ENCODE measurements at regions of chr18 and their contacts with region 1.

Region 1: GRCh38 chr18:46173393-46174341 is 69.5 kb downstream of the HAUS1 start:
- DNase-seq: peak; percentile 75
- H3K27ac ChIP-seq: peak overlapping the region; percentile 96
- CTCF ChIP-seq: peak; percentile 94

Region 2: DNA sequence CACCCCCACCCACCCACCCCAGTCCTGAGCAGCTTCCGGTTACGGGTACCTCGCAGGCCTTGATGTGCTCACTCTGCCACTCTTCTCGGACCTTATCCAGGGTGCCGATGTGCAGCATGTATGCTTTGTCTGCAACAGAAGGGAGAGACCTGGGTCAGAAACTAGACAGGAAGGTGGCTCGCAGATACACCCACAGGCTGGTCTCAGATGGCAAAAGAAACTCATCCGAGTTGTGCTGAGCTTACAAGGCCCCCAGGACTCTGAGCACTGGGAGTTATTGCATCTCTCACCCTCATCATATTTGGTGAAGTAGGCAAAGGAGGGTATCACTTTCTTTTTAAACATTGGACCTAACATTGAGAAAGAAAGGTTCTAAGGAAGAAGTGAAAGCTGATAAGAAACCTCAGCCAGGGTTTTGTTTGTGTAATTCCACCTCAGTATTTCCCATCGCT is 175.9 kb before region 1 on chr18:
- CTCF ChIA-PET with region 1: no interaction called
- POLR2A ChIA-PET with region 1: no interaction called
- DNase-seq: no peak
- H3K27ac ChIP-seq: no peak overlapping the region
- CTCF ChIP-seq: no peak

Region 3: GRCh38 chr18:46104128-46104911 is 69.3 kb before region 1 on chr18 and contains the start of gene HAUS1:
- CTCF ChIA-PET with region 1: no interaction called
- POLR2A ChIA-PET with region 1: no interaction called
- DNase-seq: peak; percentile 86
- H3K27ac ChIP-seq: peak within 1 kb of the TSS; percentile 89
- CTCF ChIP-seq: no peak

Region 4: GRCh38 chr18:46141199-46141598 is 32.5 kb before region 1 on chr18:
- CTCF ChIA-PET with region 1: no interaction called
- POLR2A ChIA-PET with region 1: no interaction called
- DNase-seq: no peak
- H3K27ac ChIP-seq: no peak overlapping the region
- CTCF ChIP-seq: no peak

Region 5: DNA sequence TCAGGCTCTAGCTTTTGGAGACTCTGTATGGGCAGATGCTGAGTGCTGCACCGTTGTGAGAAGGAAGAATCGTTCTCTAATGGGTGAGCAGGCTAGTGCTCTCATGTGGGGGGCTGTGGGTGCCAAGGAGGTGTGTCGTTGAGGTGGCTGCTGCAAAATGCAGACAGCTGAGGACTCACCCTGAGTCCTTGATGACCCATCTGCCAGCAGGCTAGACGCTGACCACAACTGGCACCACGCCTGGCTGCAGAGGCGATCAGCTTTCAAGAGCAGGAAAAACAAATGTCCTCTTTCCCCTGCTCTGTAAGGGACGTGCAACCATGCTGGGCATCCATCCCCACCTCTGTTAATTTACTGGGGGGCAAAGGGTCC is 21.2 kb before region 1 on chr18:
- CTCF ChIA-PET with region 1: interaction called, 15 read pairs
- POLR2A ChIA-PET with region 1: no interaction called
- DNase-seq: peak; percentile 20
- H3K27ac ChIP-seq: peak overlapping the region; percentile 85
- CTCF ChIP-seq: no peak

Region 6: DNA sequence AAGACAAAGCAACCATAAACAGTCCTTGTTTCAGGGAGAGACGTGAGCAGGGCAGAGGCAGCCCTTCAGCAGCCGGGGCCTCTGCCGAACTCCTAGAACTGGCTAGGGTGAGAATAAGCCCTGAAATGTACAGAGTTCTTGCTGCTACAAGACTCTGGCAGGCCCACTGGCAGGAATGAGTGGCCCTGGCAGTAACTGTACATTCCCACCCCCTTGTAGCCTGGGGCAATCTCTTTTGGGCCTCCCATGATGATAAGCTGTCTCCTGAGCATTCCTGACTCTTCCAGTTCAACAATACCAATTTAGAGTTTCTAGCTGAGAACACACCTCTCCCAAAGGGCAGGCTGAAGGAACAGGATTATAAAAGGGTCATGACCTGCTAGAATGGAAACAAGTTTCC is 15.2 kb before region 1 on chr18:
- CTCF ChIA-PET with region 1: interaction called, 15 read pairs
- POLR2A ChIA-PET with region 1: no interaction called
- DNase-seq: peak; percentile 34
- H3K27ac ChIP-seq: peak overlapping the region; percentile 51
- CTCF ChIP-seq: no peak

Measured in RWPE1 (cell line).